MCF 10A (cell line): ENCODE measurements at regions of chr22 and their contacts with region 1.

Region 1: DNA sequence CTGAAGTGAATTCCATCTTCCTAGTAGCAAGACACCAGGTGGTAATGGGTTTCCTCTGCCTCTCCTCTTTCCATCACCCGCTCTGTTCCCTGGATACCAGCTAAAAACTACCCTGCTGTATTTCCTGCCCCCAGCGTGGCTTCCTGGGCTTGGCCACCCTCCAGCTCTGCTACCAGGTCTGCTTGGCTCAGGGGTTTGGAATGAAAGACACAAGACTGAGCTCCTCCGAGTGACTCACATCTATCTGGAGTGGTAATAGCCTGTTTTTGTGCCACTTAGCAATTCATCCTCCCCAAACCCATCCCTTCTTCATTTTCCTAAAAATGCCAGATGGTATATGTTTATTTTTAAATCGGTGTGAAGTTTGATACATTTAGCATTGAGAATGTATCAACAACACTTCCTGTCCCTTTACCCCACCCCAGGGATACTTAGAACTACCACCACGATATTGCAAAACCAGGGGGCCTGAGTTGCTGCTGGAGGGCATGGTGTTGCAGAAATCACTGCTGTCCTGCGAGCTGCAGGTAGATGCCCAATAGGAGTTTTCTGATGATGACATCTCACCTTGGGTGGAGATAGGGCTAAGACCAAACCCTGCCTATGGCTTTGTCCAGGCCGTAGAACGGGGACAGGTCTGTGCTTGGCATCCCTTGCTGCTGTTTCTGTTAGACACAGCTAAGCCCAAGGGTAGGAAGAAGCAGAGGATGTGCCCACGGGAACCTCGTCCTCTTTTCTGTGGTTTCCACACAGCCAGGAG is 7.5 kb upstream of the MICAL3 start:
- DNase-seq: peak; percentile 98
- H3K4me3 Mint-ChIP-seq: peak overlapping the region; percentile 12
- H3K27ac Mint-ChIP-seq: peak overlapping the region; percentile 37
- H3K4me1 Mint-ChIP-seq: peaks cover 56% of the 10 kb centered on the region
- H3K27me3 Mint-ChIP-seq: no peaks in the 10 kb centered on the region
- CTCF ChIP-seq: no peak

Region 2: GRCh38 chr22:17836992-17837742 is 194.7 kb before region 1 on chr22:
- CTCF ChIA-PET with region 1: no interaction called
- POLR2A ChIA-PET with region 1: no interaction called
- intact Hi-C with region 1: no loop called
- DNase-seq: no peak
- H3K4me3 Mint-ChIP-seq: no peak overlapping the region
- H3K27ac Mint-ChIP-seq: no peak overlapping the region
- H3K4me1 Mint-ChIP-seq: no peaks in the 10 kb centered on the region
- H3K27me3 Mint-ChIP-seq: no peaks in the 10 kb centered on the region
- CTCF ChIP-seq: no peak

Region 3: DNA sequence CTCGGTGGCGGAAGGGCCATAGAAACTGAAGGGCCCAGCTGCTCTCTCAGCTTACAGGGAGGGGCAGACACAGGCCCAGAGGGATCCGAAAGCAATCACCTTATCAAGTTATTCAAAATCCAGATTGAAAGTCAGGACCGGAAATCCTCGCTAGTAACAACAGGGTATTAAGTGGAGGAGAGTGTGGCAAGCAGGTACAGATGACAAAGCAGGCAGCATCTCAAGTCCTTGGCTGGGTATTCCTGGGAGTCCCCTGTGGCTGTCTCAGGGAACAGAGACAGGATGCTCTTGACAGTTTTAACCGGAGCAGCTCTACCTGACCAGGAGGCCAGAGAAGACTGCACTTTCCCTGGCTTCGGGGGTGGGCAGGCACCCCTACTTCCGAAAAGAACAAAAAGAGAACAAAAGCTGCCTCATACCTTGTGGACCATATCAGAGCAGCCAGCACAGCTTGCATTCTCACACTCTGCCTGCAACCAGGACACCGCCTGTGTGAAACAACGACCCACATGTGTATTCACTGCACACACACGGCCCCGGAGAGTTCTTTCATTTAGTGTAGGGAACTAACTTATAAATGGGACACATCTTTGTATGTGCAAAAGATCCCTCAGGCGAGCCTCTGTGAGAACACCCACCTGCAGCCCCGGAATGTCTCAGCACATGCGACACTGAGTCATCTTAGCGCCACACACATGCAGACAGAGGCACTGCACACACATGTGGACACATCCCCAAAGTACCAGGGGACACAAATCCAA is 85.8 kb before region 1 on chr22:
- CTCF ChIA-PET with region 1: no interaction called
- POLR2A ChIA-PET with region 1: no interaction called
- intact Hi-C with region 1: no loop called
- DNase-seq: no peak
- H3K4me3 Mint-ChIP-seq: no peak overlapping the region
- H3K27ac Mint-ChIP-seq: peak overlapping the region; percentile 19
- H3K4me1 Mint-ChIP-seq: peaks cover 30% of the 10 kb centered on the region
- H3K27me3 Mint-ChIP-seq: no peaks in the 10 kb centered on the region
- CTCF ChIP-seq: no peak

Region 4: DNA sequence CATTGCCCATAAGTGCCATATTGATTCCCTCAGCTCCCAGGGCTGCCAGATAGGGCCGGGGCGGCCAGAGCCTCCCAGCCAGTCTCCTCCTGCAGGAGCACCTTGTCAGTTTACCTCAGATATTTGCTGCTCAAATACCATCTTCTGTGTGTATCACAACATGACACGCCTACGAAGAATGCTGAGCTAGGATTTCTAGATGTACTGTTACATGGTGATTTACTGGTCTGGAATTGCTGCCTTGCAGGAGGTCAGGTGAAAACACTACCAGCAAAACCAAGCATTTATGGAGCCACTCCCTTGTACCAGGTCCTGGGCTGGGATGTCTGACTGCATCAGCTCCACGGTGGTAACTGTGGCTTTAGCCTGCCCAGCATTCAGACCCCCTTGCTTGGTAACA is 19.3 kb before region 1 on chr22:
- CTCF ChIA-PET with region 1: no interaction called
- POLR2A ChIA-PET with region 1: interaction called, 69 read pairs
- intact Hi-C with region 1: no loop called
- DNase-seq: no peak
- H3K4me3 Mint-ChIP-seq: no peak overlapping the region
- H3K27ac Mint-ChIP-seq: peak overlapping the region; percentile 41
- H3K4me1 Mint-ChIP-seq: peaks cover 22% of the 10 kb centered on the region
- H3K27me3 Mint-ChIP-seq: no peaks in the 10 kb centered on the region
- CTCF ChIP-seq: no peak

Region 5: GRCh38 chr22:18057568-18058209 is 25.8 kb after region 1 on chr22:
- CTCF ChIA-PET with region 1: interaction called, 3 read pairs
- POLR2A ChIA-PET with region 1: interaction called, 49 read pairs
- intact Hi-C with region 1: no loop called
- DNase-seq: peak; percentile 99
- H3K4me3 Mint-ChIP-seq: no peak overlapping the region
- H3K27ac Mint-ChIP-seq: peak overlapping the region; percentile 5
- H3K4me1 Mint-ChIP-seq: peaks cover 31% of the 10 kb centered on the region
- H3K27me3 Mint-ChIP-seq: no peaks in the 10 kb centered on the region
- CTCF ChIP-seq: no peak

Region 6: GRCh38 chr22:18068381-18068988 is 36.6 kb after region 1 on chr22:
- CTCF ChIA-PET with region 1: interaction called, 54 read pairs
- POLR2A ChIA-PET with region 1: interaction called, 9 read pairs
- intact Hi-C with region 1: loop called (anchors 5 kb)
- DNase-seq: no peak
- H3K4me3 Mint-ChIP-seq: no peak overlapping the region
- H3K27ac Mint-ChIP-seq: no peak overlapping the region
- H3K4me1 Mint-ChIP-seq: peaks cover 21% of the 10 kb centered on the region
- H3K27me3 Mint-ChIP-seq: no peaks in the 10 kb centered on the region
- CTCF ChIP-seq: no peak

Region 7: GRCh38 chr22:18148293-18148965 is 116.6 kb after region 1 on chr22:
- CTCF ChIA-PET with region 1: no interaction called
- POLR2A ChIA-PET with region 1: no interaction called
- intact Hi-C with region 1: no loop called
- DNase-seq: no peak
- H3K4me3 Mint-ChIP-seq: no peak overlapping the region
- H3K27ac Mint-ChIP-seq: no peak overlapping the region
- H3K4me1 Mint-ChIP-seq: peaks cover 8% of the 10 kb centered on the region
- H3K27me3 Mint-ChIP-seq: no peaks in the 10 kb centered on the region
- CTCF ChIP-seq: no peak